GM13977 (cell line): ENCODE measurements at regions of chr4 and their contacts with region 1.

Region 1: DNA sequence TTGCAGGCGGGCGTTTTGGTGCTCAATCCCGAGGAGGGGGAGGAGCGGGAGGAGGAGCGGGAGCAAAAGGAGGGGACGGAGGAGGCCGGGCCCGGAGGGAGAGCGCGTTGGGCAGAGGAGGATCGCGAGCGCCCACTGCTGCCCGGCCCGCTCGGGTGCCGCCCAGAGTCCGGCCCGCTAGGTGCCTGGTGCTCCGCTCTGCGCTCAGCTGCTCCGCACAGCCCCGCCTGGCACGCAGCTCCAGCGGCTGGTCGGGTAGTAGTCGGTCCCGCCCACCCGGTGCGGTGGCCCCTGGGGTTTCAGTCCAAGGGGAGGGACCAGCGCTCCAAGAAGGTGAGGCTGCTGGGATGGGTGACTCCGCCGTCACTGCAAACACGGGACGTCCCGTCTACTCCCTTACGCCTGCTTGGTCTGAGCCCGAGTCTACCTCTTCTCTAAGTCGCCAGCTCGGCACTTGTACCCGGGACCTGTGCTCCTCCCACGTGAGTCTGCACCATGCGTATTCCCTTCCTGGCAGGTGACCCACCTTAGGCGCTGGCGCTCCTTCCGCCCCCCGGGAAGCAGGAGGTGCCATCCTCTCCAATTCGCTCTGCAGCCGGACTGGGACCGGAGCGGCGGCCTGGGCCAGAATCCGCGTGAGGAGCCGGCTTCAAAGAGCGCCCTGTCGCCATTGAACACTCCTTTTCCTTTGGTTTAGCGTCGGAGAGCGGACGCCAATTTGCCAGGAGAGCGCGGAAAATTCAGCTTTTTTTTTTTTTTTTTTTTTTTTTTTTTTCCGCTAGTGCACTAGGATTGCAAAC is 405 bp upstream of the HS3ST1 start:
- DNase-seq: peak; percentile 80
- CTCF ChIP-seq: peak; percentile 80

Region 2: GRCh38 chr4:10582059-10582686 is 846.9 kb before region 1 on chr4:
- in situ Hi-C with region 1: loop called (anchors 10 kb)
- DNase-seq: no peak
- CTCF ChIP-seq: peak; percentile 88